Cardiac septum (tissue), 1 donor: ENCODE measurements at regions of chr2 and their contacts with region 1.

Region 1: DNA sequence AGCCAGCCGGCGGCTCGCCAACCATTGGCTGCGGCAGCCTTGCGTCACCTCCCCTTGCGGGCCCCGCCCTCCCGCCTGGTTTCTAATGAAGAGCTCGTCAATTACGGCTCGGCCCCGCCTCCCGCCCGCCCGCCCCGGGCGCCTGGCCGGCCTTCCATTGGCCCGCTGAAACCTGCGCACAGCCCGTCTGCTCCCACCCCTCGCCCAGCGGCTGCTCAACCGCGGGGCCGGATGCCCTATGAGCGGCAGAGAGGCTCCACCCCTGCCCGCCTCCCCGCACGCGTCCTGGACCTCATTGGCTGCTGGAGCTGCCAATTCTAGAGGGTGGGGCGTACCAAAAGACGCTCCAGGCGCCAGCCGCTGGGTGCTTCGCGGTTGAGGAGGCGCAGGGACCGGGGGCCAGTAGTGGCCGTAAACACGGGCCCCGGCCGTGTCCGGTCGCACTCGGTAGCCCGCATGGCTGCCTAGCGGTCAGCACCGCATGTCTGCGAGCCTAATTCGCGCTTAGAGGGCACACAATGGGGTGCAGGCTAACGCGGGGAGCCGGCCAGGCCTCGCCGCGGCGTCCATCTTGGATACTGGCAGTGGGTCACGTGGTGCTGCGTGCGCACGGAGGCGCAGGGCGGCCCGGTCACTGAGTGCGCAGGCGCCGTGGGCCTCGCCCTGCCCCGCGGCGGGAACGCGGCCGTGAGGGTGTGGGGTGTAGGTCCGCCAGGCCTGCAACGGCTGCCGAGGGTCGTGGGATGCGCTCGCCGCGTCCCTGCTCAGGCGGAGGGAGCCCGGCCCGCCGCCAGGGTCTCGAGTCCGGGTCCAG is 454 bp upstream of the HDAC4 start:
- DNase-seq: peak; percentile 100

Region 2: DNA sequence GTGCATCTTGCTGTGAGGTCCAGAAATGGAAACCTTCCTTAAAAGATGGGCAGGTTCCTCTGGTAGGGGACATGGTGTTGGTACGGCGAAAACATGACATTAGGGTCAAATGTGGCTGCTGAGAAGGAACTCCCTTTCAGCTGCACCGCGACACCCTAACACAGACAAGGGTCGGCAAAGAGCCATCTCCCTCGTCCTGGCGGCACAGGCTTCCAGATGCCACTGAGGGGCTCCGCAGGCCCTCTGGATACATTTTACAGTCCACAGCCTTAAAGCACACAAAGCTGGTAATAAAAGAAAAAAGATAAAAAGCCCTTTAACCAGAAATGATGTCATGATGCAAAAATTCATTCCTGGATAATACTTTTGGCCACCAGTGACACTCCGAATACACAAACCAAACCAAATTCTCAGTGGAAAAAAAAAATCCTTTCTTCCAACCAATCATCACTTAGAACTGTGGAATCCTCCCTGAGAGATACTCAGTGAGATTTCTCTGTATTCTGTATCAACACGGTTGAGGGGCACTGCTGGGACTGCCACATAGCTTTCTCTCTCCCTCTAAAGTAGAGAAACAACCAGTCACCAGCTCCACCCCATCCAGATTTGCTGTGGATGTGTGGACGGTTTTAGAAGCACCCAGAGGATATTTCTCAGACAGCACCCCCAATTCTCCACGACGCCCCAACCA is 175.3 kb before region 1 on chr2:
- intact Hi-C with region 1: loop called (anchors 5 kb)
- DNase-seq: no peak

Region 3: DNA sequence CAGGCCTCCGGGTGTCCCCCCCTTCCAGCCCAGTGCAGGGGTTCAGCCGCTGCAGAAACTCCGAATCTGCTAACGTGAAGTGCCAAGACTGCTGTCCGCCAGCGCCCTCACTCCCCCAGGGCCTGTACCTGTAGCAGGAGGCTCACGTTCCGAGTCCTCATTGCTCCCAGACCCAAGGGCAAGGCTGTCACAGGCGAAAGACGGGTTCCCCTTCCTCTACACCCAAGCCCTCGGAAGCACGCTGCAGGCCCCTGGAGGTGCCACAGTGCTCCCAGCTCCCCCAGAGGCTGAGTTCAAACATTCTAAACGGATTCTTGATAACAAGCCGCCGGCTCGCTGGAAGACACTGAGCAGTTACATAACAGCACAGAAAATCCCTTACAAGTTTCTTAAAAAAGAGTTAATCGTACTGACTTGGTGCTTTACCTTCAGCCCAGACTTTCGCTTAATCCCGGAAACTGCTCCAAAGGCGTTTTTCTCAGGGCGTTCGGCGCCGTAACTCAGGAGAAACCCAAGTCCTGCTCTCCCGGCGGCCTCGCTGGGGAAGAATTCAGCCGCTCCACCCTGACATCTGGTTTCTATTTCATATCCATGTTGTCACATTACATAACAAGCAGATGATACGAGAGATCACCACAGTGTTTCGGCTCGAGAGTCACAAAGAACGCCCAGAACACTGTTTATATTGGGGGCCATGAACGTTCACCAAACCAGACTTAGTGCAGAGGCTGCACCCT is 92.4 kb before region 1 on chr2:
- intact Hi-C with region 1: loop called (anchors 5 kb)
- DNase-seq: peak; percentile 78

Region 4: GRCh38 chr2:239326831-239327535 is 74.3 kb before region 1 on chr2:
- intact Hi-C with region 1: loop called (anchors 2 kb)
- DNase-seq: peak; percentile 64